ENCODE measurements at regions of chr1 and their contacts with region 1.

Region 1: DNA sequence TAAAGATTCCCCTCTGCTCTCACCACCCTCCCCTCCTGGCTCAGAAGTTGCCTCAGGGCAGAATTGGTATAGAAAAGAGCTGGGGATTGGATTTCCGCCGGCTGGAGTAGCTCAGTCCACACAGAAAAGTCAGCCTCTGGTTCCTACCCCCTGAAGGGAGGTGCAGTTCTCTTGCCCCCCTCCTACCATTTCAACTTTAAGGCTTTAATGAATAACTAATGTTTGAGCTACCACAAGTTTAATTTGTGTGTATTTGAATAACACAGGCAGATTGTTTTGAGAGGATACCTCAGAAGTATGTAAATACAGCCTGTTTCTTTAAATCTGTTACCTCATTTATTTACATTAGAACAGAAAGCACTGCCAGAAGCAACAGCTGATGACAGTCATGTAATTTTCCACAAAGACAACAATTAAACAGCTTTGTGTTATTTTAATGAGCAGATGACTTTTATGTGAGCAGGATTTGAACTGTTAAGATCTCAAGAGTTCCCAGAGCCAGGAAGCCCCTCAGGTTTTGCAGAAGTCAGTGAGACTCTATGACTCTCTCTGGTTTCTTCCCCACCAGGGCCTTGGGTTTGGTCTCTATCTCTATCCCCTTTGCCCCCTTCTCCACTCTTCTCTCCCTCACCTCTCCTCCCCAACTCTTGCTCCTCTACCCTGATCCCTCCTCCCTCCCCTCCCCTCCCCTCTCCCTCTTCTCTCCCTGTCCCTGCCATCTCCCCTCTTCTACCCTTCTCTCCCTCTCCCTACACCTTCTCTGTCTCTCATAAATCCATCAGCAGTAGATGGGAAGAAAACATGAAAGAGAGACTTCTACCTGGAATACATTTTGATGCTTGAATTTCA is 26.3 kb downstream of the DUSP10 start:
- DNase-seq: peak in 1 of 2 experiments; percentile 87
- H3K4me3 ChIP-seq: peak overlapping the region in 1 of 4 experiments; percentile 38; a peak in 1 of 8 replicates
- H3K27ac ChIP-seq: no peak overlapping the region
- H3K4me1 ChIP-seq: peaks cover 5 to 26% (median 16%) of the 10 kb centered on the region in 4 experiments; a peak in 5 of 7 replicates
- H3K27me3 ChIP-seq: peaks cover 11 to 25% (median 18%) of the 10 kb centered on the region in 4 experiments
- CTCF ChIP-seq: no peak
- EP300 ChIP-seq: peak in 1 of 2 experiments; percentile 55; a peak in 1 of 3 replicates
- POLR2A ChIP-seq: no peak
- RAD21 ChIP-seq: no peak

Region 2: DNA sequence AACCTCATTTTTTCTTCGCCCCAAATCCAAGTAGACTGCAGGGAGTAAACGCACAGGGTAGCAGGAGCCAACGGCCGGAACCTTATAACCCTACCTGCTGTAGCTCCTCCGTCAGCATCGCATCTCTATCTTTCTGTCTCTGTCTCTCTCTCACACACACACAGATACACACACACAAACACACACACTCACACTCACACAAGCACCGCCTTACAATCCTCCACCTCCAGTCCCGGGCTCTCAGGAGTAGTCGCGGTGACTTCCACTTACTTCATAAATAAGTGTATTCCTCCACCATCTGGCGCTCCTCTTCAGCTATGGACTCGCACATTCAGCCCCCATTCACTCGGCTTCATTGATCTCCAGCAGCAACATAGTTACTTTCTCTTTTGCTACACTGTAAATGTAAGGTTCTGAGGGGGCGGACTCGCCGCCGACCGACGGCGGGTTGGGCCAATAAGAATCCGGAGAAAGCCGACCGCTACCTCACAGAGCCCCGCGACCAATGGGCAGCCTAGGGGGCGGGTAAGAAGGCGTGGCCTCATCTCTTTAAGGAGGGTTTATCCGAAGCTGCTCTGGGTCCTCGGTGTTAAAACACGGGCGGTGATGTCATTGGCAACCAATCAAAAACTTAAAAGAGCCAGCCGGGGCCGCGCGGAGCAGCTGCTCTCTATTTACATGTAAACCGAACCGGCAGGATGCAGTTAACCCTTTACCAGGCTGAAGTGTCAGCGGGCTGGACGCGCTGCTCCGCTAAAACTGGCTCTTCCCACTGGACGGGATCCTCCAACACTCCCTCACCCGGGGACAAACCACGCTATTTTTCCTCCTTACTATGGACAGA is 26.4 kb after region 1 on chr1 and contains the start of gene DUSP10:
- CTCF ChIA-PET with region 1: interaction called, 5 read pairs
- POLR2A ChIA-PET with region 1: interaction called, 13 read pairs
- DNase-seq: peak; percentile 93 to 97
- H3K4me3 ChIP-seq: peak within 1 kb of the TSS; percentile 78 to 95 (median 86)
- H3K27ac ChIP-seq: no peak within 1 kb of the TSS
- H3K4me1 ChIP-seq: peaks cover 5 to 13% (median 8%) of the 10 kb centered on the region in 4 experiments
- H3K27me3 ChIP-seq: peaks cover 6 to 27% (median 23%) of the 10 kb centered on the region in 4 experiments
- CTCF ChIP-seq: no peak
- EP300 ChIP-seq: no peak
- POLR2A ChIP-seq: peak in 1 of 2 experiments; percentile 42; a peak in 1 of 3 replicates
- RAD21 ChIP-seq: 0 out of 4 replicates have a peak, but pooled peaks of 1 of the 2 experiments have one; percentile 8
- total RNA-seq, gene DUSP10: 1.2 and 1.5 TPM in 2 replicates

Region 3: GRCh38 chr1:221761354-221762002 is 45.9 kb after region 1 on chr1:
- CTCF ChIA-PET with region 1: no interaction called
- POLR2A ChIA-PET with region 1: no interaction called
- DNase-seq: no peak
- H3K4me3 ChIP-seq: no peak overlapping the region
- H3K27ac ChIP-seq: no peak overlapping the region
- H3K4me1 ChIP-seq: no peaks in the 10 kb centered on the region
- H3K27me3 ChIP-seq: no peaks in the 10 kb centered on the region
- CTCF ChIP-seq: no peak
- EP300 ChIP-seq: no peak
- POLR2A ChIP-seq: no peak
- RAD21 ChIP-seq: no peak